ENCODE measurements at regions of chr22 and their contacts with region 1.

Region 1: GRCh38 chr22:20418211-20418788 is 19.3 kb downstream of the SCARF2 start:
- DNase-seq: peak; percentile 84 to 85
- ATAC-seq: peak; percentile 85 to 94 (median 91)
- H3K4me3 ChIP-seq: peak overlapping the region in 9 of 10 donors; percentile 26 to 57 (median 44)
- H3K27ac ChIP-seq: peak overlapping the region in 2 of 10 donors; percentile 12 to 54
- H3K4me1 ChIP-seq: peaks cover 0 to 19% (median 12%) of the 10 kb centered on the region in 9 donors
- H3K27me3 ChIP-seq: no peaks in the 10 kb centered on the region
- CTCF ChIP-seq: peak; percentile 86 to 97 (median 91)

Region 2: DNA sequence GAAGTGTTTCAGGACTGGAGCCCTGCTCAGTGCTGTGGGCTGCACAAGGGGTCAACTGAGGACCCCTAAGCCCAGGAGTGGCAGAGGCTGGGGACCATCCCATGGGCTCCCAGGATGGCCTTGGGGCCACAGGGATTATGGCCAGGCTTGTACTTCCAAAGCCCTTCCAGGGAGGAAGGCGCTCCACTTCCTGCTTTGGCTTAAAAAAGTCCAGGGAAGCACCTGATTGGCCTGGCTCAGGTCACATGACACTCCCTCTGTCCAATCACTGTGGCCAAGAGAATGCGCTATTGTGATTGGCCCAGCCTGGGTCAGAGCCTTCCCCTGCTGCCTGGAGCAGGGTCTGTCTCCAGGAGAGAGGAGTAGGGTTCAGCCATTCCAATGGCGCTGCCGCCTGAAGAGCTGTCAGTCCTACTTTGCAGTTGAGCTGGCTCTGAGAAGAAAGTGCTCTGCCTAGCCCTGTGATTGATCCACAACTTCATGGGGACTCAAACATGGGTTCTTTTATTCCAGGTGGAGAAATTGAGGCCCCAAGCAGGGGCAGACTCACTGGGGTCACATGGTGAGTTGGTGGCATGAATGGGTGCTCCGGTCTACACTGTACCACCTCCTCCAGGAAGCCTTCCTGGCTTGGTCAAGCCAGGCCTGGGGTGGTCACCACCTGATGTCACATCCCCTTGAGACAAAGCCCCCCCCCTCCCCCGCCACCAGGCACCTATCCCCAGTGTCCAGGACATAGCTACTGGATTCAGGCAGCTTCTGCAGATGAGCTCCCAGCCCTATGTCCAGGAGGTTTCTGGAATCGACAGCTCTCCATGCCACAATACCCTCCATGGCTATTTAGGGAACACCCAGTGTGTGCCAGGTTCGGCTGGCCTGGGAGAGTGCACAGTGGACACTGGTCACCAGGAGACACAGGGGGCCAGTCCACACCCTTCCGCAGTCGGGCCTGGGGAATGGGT is 198.4 kb before region 1 on chr22:
- intact Hi-C with region 1: no loop called
- DNase-seq: no peak
- ATAC-seq: no peak
- H3K4me3 ChIP-seq: no peak overlapping the region
- H3K27ac ChIP-seq: no peak overlapping the region
- H3K4me1 ChIP-seq: peaks cover 0 to 14% (median 0%) of the 10 kb centered on the region in 9 donors
- H3K27me3 ChIP-seq: no peaks in the 10 kb centered on the region
- CTCF ChIP-seq: no peak

Region 3: DNA sequence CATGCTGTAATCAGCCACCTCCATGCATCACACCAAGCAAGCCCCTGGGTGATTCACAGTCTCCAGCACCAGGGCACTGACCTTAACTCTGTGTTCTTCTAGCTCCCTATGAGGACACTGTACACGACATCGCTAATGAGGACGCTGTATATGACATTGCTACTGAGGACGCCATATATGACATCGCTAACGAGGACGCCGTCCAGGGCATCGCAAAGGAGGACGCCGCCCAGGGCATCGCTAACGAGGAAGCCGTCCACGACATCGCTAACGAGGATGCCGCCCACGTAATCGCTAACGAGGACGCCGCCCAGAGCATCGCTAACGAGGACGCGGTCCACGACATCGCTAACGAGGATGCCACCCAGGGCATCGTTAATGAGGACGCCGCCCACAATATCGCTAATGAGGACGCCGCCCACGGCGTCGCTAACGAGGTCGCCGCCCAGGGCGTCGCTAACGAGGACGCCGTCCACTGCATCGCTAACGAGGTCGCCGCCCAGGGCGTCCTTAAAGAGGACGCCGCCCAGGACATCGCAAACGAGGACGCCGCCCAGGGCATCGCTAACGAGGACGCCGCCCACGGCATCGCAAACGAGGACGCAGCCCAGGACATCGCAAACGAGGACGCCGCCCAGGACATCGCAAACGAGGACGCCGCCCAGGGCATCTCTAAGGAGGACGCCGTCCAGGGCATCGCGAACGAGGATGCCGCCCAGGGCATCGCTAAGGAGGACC is 63.9 kb before region 1 on chr22:
- intact Hi-C with region 1: no loop called
- DNase-seq: no peak
- ATAC-seq: no peak
- H3K4me3 ChIP-seq: no peak overlapping the region
- H3K27ac ChIP-seq: no peak overlapping the region
- H3K4me1 ChIP-seq: no peaks in the 10 kb centered on the region
- H3K27me3 ChIP-seq: no peaks in the 10 kb centered on the region
- CTCF ChIP-seq: no peak

Region 4: DNA sequence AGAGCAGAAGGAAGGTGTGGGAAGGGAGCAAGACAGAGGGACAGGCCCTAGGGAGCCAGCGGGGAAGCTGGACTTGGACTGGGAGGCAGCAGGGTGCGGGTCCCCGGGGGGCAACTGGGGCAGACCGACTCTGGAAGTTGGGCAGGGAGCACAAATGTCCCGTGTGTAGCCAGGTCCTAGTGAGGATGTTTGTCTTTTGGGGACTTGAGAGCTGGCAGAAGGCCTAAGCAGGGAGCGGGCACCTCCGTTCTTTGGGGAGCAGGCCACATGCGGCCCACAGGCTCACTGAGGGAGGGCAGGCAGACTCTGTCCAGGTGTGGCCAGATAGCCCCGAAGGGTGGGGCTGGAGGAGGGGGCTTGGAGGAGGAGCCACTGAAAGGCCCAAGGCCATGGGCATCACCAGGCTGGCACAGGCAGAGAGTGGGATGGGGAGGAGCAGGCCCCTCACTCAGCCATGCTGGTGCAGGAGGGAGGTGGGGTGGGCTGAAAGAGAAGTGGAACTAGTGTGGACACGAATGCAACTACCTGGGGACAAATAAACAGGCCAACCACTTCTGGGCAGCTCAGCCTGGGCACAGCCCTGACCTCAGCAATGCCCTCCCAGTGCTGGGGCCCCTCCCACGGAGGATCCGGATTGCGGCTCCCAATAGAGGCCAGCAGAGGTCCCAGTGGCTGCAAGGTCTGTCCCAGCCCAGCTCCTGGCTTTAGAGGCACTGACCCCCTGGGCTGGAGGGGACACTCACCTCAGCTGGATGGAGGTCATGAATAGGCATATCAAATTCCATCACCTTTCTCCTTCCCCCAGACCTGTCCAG is 20.6 kb after region 1 on chr22:
- intact Hi-C with region 1: loop called in 1 of 10 experiments (anchors 1 kb)
- DNase-seq: no peak
- ATAC-seq: peak in 6 of 8 donors; percentile 13 to 51 (median 36)
- H3K4me3 ChIP-seq: peak overlapping the region in 9 of 10 donors; percentile 54 to 79 (median 69)
- H3K27ac ChIP-seq: peak overlapping the region in 9 of 10 donors; percentile 70 to 91 (median 87)
- H3K4me1 ChIP-seq: peaks cover 8 to 54% (median 34%) of the 10 kb centered on the region in 9 donors
- H3K27me3 ChIP-seq: peaks cover 0 to 52% (median 16%) of the 10 kb centered on the region in 7 donors
- CTCF ChIP-seq: peak in 5 of 9 donors; percentile 23 to 49 (median 30)

Region 5: GRCh38 chr22:20456064-20456721 is 37.9 kb after region 1 on chr22:
- intact Hi-C with region 1: loop called (anchors 1 to 5 kb)
- DNase-seq: peak; percentile 74 to 75
- ATAC-seq: peak; percentile 75 to 93 (median 88)
- H3K4me3 ChIP-seq: no peak overlapping the region
- H3K27ac ChIP-seq: no peak overlapping the region
- H3K4me1 ChIP-seq: peaks cover 0 to 18% (median 3%) of the 10 kb centered on the region in 9 donors
- H3K27me3 ChIP-seq: no peaks in the 10 kb centered on the region
- CTCF ChIP-seq: peak; percentile 87 to 95 (median 93)

Region 6: GRCh38 chr22:20495861-20496681 is 77.8 kb after region 1 on chr22:
- intact Hi-C with region 1: loop called in 7 of 10 experiments (anchors 1 to 5 kb)
- DNase-seq: peak; percentile 91 to 93
- ATAC-seq: peak; percentile 96 to 98 (median 97)
- H3K4me3 ChIP-seq: peak overlapping the region; percentile 61 to 86 (median 78)
- H3K27ac ChIP-seq: peak overlapping the region; percentile 68 to 97 (median 94)
- H3K4me1 ChIP-seq: peaks cover 2 to 28% (median 22%) of the 10 kb centered on the region in 9 donors
- H3K27me3 ChIP-seq: no peaks in the 10 kb centered on the region
- CTCF ChIP-seq: peak; percentile 83 to 96 (median 91)

Region 7: GRCh38 chr22:20568989-20569769 is 150.9 kb after region 1 on chr22:
- intact Hi-C with region 1: loop called in 6 of 10 experiments (anchors 5 to 10 kb)
- DNase-seq: peak; percentile 44 to 65
- ATAC-seq: peak; percentile 67 to 87 (median 73)
- H3K4me3 ChIP-seq: no peak overlapping the region
- H3K27ac ChIP-seq: peak overlapping the region in 8 of 10 donors; percentile 5 to 58 (median 31)
- H3K4me1 ChIP-seq: peaks cover 11 to 70% (median 27%) of the 10 kb centered on the region in 9 donors
- H3K27me3 ChIP-seq: no peaks in the 10 kb centered on the region
- CTCF ChIP-seq: no peak